ENCODE measurements at regions of chr11 and their contacts with region 1.

Region 1: GRCh38 chr11:72430741-72431570 is 3.4 kb downstream of the CLPB start:
- DNase-seq: no peak
- ATAC-seq: no peak
- H3K4me3 Mint-ChIP-seq: no peak overlapping the region
- H3K27ac Mint-ChIP-seq: no peak overlapping the region
- H3K4me1 Mint-ChIP-seq: peaks cover 36% of the 10 kb centered on the region
- H3K27me3 Mint-ChIP-seq: no peaks in the 10 kb centered on the region
- CTCF ChIP-seq: no peak

Region 2: DNA sequence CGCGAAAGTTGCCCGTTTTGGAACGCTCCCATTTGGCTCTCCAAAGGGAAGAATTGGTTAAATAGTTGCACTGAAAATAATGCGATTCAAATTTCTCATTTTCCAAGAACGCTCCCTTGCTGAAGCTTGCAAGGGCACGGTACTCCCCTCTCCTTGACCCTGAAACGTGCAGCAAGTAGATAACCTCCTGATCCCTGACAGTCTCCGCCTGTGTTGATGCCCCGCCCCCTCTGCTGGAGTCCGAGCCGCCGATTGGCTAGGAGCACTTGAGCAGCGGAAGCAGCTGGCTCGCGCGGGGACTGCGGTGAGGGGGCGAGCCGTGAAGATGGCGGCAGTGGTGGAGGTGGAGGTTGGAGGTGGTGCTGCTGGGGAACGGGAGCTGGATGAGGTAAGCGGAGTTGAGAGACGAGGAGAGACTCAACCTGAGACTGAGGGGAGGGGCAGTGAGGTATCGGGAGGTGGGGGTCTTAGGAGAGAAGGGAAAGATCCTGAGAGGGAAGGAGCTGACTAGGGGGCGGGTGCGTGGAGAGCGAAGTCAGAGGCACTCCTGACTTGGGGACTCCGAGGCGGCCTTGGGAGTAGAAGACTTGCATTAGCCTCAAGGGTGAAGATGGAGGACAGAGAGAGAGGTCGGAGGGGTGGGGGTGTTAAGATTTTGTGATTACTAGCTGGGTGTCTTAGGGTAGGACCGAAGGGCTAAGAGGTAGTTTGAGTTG is 502.1 kb before region 1 on chr11 and contains the start of gene RNF121:
- CTCF ChIA-PET with region 1: interaction called, 3 read pairs
- POLR2A ChIA-PET with region 1: no interaction called
- intact Hi-C with region 1: loop called (anchors 2 kb)
- DNase-seq: peak; percentile 90
- ATAC-seq: peak; percentile 88
- H3K4me3 Mint-ChIP-seq: peak within 1 kb of the TSS; percentile 95
- H3K27ac Mint-ChIP-seq: peak within 1 kb of the TSS; percentile 98
- H3K4me1 Mint-ChIP-seq: peaks cover 58% of the 10 kb centered on the region
- H3K27me3 Mint-ChIP-seq: no peaks in the 10 kb centered on the region
- CTCF ChIP-seq: no peak
- total RNA-seq, gene RNF121: 44.4 and 47.4 TPM in 2 replicates

Region 3: GRCh38 chr11:72024069-72024754 is 406.7 kb before region 1 on chr11:
- CTCF ChIA-PET with region 1: interaction called, 18 read pairs
- POLR2A ChIA-PET with region 1: no interaction called
- intact Hi-C with region 1: loop called (anchors 1 kb)
- DNase-seq: no peak
- ATAC-seq: no peak
- H3K4me3 Mint-ChIP-seq: no peak overlapping the region
- H3K27ac Mint-ChIP-seq: no peak overlapping the region
- H3K4me1 Mint-ChIP-seq: peaks cover 21% of the 10 kb centered on the region
- H3K27me3 Mint-ChIP-seq: no peaks in the 10 kb centered on the region
- CTCF ChIP-seq: no peak

Region 4: GRCh38 chr11:72112321-72113219 is 318.4 kb before region 1 on chr11 and contains the start of gene ANAPC15:
- CTCF ChIA-PET with region 1: no interaction called
- POLR2A ChIA-PET with region 1: no interaction called
- intact Hi-C with region 1: loop called (anchors 5 kb)
- DNase-seq: peak; percentile 90
- ATAC-seq: peak; percentile 90
- H3K4me3 Mint-ChIP-seq: peak within 1 kb of the TSS; percentile 97
- H3K27ac Mint-ChIP-seq: peak within 1 kb of the TSS; percentile 100
- H3K4me1 Mint-ChIP-seq: peaks cover 25% of the 10 kb centered on the region
- H3K27me3 Mint-ChIP-seq: peaks cover 13% of the 10 kb centered on the region
- CTCF ChIP-seq: no peak
- total RNA-seq, gene ANAPC15: 44.4 and 56.3 TPM in 2 replicates

Region 5: GRCh38 chr11:72222907-72223614 is 207.9 kb before region 1 on chr11:
- CTCF ChIA-PET with region 1: interaction called, 4 read pairs
- POLR2A ChIA-PET with region 1: interaction called, 3 read pairs
- intact Hi-C with region 1: loop called (anchors 1 kb)
- DNase-seq: peak; percentile 90
- ATAC-seq: peak; percentile 76
- H3K4me3 Mint-ChIP-seq: peak overlapping the region; percentile 87
- H3K27ac Mint-ChIP-seq: peak overlapping the region; percentile 93
- H3K4me1 Mint-ChIP-seq: peaks cover 44% of the 10 kb centered on the region
- H3K27me3 Mint-ChIP-seq: no peaks in the 10 kb centered on the region
- CTCF ChIP-seq: no peak

Region 6: GRCh38 chr11:72278911-72279310 is 152.0 kb before region 1 on chr11:
- CTCF ChIA-PET with region 1: no interaction called
- POLR2A ChIA-PET with region 1: no interaction called
- intact Hi-C with region 1: no loop called
- DNase-seq: no peak
- ATAC-seq: no peak
- H3K4me3 Mint-ChIP-seq: no peak overlapping the region
- H3K27ac Mint-ChIP-seq: no peak overlapping the region
- H3K4me1 Mint-ChIP-seq: no peaks in the 10 kb centered on the region
- H3K27me3 Mint-ChIP-seq: peaks cover 30% of the 10 kb centered on the region
- CTCF ChIP-seq: no peak

Region 7: GRCh38 chr11:72413914-72414628 is 16.9 kb before region 1 on chr11:
- CTCF ChIA-PET with region 1: interaction called, 23 read pairs
- POLR2A ChIA-PET with region 1: interaction called, 4 read pairs
- intact Hi-C with region 1: loop called (anchors 1 kb)
- DNase-seq: peak; percentile 64
- ATAC-seq: peak; percentile 37
- H3K4me3 Mint-ChIP-seq: no peak overlapping the region
- H3K27ac Mint-ChIP-seq: no peak overlapping the region
- H3K4me1 Mint-ChIP-seq: peaks cover 33% of the 10 kb centered on the region
- H3K27me3 Mint-ChIP-seq: no peaks in the 10 kb centered on the region
- CTCF ChIP-seq: no peak